Prostate gland (tissue), 2 donors: ENCODE measurements at regions of chr18 and their contacts with region 1.

Region 1: GRCh38 chr18:21955757-21956652 is 213.4 kb upstream of the GATA6 start:
- DNase-seq: peak; percentile 66
- H3K4me3 ChIP-seq: no peak overlapping the region
- H3K27ac ChIP-seq: no peak overlapping the region
- H3K4me1 ChIP-seq: no peaks in the 10 kb centered on the region
- H3K27me3 ChIP-seq: no peaks in the 10 kb centered on the region
- CTCF ChIP-seq: peak; percentile 71 to 85 (median 78)
- POLR2A ChIP-seq: no peak

Region 2: DNA sequence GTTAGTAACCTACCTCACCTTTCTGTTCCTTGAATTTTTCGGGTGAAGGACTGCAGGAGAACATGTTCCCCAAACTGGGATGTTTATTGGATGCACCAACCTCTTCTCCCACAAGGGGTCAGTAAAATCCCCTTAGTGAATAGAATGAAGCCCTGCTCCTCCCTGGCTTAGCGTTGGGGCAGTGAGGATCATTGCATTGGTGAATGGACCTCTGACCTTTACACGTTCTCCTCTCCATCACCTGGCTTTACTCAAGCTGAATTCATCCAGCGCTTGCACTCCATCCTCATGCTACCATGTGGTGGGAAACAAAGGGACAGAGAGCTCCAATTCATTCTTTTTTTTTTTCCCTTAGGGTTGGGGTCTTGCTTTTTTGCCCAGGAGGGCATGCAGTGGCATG is 58.2 kb before region 1 on chr18:
- intact Hi-C with region 1: loop called (anchors 5 kb)
- DNase-seq: peak; percentile 22
- H3K4me3 ChIP-seq: no peak overlapping the region
- H3K27ac ChIP-seq: no peak overlapping the region
- H3K4me1 ChIP-seq: no peaks in the 10 kb centered on the region
- H3K27me3 ChIP-seq: no peaks in the 10 kb centered on the region
- CTCF ChIP-seq: peak; percentile 39 to 60 (median 50)
- POLR2A ChIP-seq: no peak